Activated naive CD4-positive, alpha-beta T cell treated with anti-CD3 and anti-CD28 coated beads for 36 hours (primary cell): ENCODE measurements at regions of chr4 and their contacts with region 1.

Region 1: DNA sequence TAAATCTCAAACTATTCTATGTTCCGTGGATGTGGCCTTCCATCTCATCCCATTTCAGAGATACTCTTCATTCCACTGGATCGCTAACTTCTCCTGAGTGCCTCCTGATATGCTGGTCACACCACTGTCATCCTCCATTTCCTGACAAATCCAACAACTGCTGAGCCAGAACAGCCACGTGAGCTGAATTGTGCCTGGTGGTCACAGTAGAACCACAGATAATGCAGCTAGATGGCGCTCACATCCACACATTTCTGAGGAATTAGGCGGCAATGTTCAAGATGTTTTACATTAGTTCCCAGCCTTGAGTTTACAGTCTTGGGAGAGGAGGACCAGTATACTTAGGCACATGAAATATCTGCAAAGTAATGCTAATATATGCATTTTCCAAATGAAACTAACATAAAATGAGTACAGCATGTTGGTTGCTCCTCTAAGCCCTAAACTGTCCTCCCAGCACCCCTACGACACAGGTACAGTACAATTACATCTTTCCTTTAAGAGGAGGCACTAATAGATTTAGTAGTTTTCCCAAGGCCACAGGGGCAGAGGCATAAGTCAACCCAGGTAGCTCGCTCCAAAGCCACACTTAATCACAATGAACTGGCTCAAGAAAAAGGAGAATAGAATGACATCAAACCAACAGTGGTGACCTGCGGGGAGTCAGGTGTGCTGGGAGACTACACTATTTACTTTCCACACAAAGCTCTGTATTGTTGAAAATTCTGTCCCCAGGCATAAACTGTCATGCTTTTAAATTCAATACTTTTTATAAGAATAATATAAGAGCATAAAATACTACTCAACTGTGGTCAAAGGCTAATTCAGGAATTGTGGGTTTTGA is 134.2 kb downstream of the CHIC2 start:
- DNase-seq: peak; percentile 83
- H3K4me3 Mint-ChIP-seq: no peak overlapping the region
- H3K27ac Mint-ChIP-seq: no peak overlapping the region
- H3K4me1 Mint-ChIP-seq: no peaks in the 10 kb centered on the region
- H3K27me3 Mint-ChIP-seq: peaks cover 8% of the 10 kb centered on the region

Region 2: GRCh38 chr4:53015681-53016080 is 914.5 kb before region 1 on chr4:
- CTCF ChIA-PET with region 1: no interaction called
- intact Hi-C with region 1: loop called (anchors 10 kb)
- DNase-seq: peak; percentile 49
- H3K4me3 Mint-ChIP-seq: no peak overlapping the region
- H3K27ac Mint-ChIP-seq: no peak overlapping the region
- H3K4me1 Mint-ChIP-seq: peaks cover 36% of the 10 kb centered on the region
- H3K27me3 Mint-ChIP-seq: no peaks in the 10 kb centered on the region

Region 3: DNA sequence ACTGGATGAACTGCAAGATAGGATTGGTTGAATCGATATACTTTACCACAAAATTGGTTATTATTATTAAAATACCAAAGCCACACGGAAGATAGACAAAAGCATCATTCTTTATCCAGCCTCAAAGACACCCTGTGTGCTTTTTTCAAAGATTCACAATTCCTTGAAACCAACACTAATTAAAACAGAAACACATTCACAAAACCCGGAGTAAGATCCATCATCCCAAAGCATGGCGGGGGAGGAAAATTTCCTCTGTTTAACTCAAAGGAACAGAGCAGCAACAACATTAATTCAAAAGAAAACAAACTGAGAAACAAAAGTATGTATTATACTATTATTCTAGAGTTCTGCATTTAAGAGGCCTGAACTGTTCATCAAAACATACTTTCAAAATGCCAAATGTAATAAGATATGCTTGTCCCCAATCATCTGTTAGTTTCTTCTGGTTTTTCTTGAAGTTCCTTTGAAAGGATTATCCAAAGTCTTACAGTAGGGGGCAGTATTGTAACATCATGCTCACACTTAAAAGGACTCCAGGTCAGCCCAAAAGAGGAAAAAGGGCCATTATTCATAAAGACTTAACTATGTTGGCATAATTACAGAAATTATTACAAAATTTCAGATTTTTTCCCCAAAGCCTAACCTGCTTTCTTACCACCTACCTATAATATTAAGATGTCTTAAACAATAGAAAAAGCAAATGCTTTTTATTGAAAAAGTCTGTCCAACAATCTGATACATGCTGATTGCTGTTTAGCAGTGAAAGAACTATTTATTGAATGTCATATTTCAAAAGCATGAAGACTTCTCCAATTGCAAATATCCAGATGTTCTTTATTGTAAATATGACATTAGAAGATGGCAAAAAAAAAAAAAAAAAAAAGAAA is 733.0 kb before region 1 on chr4:
- CTCF ChIA-PET with region 1: interaction called, 3 read pairs
- intact Hi-C with region 1: loop called (anchors 5 kb)
- DNase-seq: no peak
- H3K4me3 Mint-ChIP-seq: no peak overlapping the region
- H3K27ac Mint-ChIP-seq: no peak overlapping the region
- H3K4me1 Mint-ChIP-seq: no peaks in the 10 kb centered on the region
- H3K27me3 Mint-ChIP-seq: no peaks in the 10 kb centered on the region

Region 4: DNA sequence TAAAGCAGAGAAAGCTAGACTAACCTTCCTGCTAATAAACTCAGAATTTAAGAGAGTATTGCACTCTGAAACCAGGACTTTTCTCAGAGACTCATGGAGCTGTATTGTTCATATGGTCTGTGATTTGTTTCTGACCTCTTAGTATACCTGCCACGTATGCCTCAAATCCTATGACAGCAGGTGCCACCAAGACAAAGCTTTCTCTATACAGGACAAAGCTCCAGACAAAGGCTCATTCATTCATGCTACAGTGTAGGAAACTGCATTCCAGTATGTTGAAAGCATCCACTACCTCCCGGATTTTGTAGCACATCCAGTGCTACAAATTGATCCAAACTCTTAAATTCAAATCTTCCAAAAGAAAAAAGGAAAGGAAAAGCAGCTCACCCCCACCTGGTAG is 44.1 kb before region 1 on chr4:
- CTCF ChIA-PET with region 1: no interaction called
- intact Hi-C with region 1: no loop called
- DNase-seq: no peak
- H3K4me3 Mint-ChIP-seq: no peak overlapping the region
- H3K27ac Mint-ChIP-seq: no peak overlapping the region
- H3K4me1 Mint-ChIP-seq: no peaks in the 10 kb centered on the region
- H3K27me3 Mint-ChIP-seq: peaks cover 5% of the 10 kb centered on the region

Region 5: DNA sequence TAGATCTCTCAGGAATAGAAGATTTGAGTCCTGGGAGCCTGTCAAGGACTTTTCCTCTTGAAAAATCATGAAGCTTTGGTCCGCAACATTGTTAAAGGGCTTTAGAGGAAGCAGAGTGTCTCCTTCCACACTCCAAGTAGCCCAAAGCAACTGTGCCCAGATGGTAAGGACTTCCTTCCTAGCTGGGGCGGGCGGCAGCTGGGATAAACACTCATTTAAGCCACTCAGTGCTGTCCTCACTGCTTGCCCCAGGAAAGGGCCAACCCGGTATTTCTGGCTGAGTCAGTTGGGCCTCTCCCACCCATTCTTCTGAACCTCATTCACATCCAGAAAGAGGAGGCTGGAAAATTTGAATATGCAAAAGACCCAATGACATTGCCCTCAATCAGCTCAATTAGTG is 10.1 kb before region 1 on chr4:
- CTCF ChIA-PET with region 1: interaction called, 15 read pairs
- intact Hi-C with region 1: no loop called
- DNase-seq: no peak
- H3K4me3 Mint-ChIP-seq: no peak overlapping the region
- H3K27ac Mint-ChIP-seq: no peak overlapping the region
- H3K4me1 Mint-ChIP-seq: no peaks in the 10 kb centered on the region
- H3K27me3 Mint-ChIP-seq: peaks cover 6% of the 10 kb centered on the region

Region 6: DNA sequence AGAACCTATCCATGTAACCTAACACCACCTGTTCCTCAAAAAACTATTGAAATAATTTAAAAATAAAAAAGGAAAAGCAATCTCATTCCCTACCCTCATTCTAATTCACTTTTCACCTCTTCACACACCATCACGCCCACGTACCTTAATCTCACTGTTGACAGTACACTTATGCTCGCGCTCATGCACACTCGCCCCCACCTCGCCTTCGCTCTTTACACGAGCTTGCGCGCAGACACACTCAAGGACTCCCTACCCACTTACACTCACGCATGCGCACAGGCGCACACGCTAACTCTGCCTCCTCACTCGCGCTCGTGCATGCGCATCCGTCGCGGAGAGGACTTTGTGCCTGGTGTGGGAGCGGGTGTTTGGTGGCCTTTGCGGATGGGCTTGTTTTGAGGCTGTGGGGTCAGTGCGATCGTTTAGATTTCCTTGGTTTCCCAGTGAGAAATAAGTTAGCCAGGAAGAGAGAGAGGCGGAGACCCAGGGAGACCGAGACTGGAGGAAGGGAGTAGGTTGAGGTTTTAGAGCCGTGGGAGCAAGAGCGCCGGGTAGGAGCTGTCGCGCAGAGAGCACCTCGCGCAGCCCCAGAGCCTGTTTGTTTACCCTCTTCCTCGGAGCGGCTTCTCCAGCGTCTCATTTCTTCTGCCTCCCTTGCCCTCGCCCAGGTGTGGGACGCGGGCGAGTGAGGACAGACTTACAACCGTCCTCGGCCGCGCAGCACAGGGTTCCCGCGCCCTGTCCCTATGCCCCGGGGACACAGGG is 161.6 kb after region 1 on chr4:
- CTCF ChIA-PET with region 1: interaction called, 4 read pairs
- intact Hi-C with region 1: loop called (anchors 5 kb)
- DNase-seq: peak; percentile 74
- H3K4me3 Mint-ChIP-seq: peak overlapping the region; percentile 88
- H3K27ac Mint-ChIP-seq: no peak overlapping the region
- H3K4me1 Mint-ChIP-seq: peaks cover 31% of the 10 kb centered on the region
- H3K27me3 Mint-ChIP-seq: peaks cover 44% of the 10 kb centered on the region

Region 7: GRCh38 chr4:54217642-54218495 is 287.7 kb after region 1 on chr4:
- CTCF ChIA-PET with region 1: interaction called, 132 read pairs
- intact Hi-C with region 1: loop called (anchors 1 kb)
- DNase-seq: peak; percentile 70
- H3K4me3 Mint-ChIP-seq: peak overlapping the region; percentile 22
- H3K27ac Mint-ChIP-seq: no peak overlapping the region
- H3K4me1 Mint-ChIP-seq: peaks cover 4% of the 10 kb centered on the region
- H3K27me3 Mint-ChIP-seq: peaks cover 29% of the 10 kb centered on the region

Region 8: GRCh38 chr4:54228056-54228527 is 297.9 kb after region 1 on chr4:
- CTCF ChIA-PET with region 1: interaction called, 78 read pairs
- intact Hi-C with region 1: loop called (anchors 1 kb)
- DNase-seq: peak; percentile 79
- H3K4me3 Mint-ChIP-seq: peak overlapping the region; percentile 59
- H3K27ac Mint-ChIP-seq: no peak overlapping the region
- H3K4me1 Mint-ChIP-seq: peaks cover 49% of the 10 kb centered on the region
- H3K27me3 Mint-ChIP-seq: peaks cover 89% of the 10 kb centered on the region